Caco-2 (cell line): ENCODE measurements at regions of chr11 and their contacts with region 1.

Region 1: GRCh38 chr11:60775420-60775961 is 9.6 kb upstream of the MS4A10 start:
- DNase-seq: peak; percentile 83 to 89
- H3K4me3 ChIP-seq: no peak overlapping the region
- H3K4me3 Mint-ChIP-seq: no peak overlapping the region
- H3K27ac Mint-ChIP-seq: no peak overlapping the region
- H3K4me1 ChIP-seq: no peaks in the 10 kb centered on the region
- H3K4me1 Mint-ChIP-seq: no peaks in the 10 kb centered on the region
- H3K27me3 ChIP-seq: no peaks in the 10 kb centered on the region
- H3K27me3 Mint-ChIP-seq: no peaks in the 10 kb centered on the region
- CTCF ChIP-seq: peak; percentile 92 to 95

Region 2: GRCh38 chr11:60700689-60701480 is 74.6 kb before region 1 on chr11:
- CTCF ChIA-PET with region 1: interaction called, 4 read pairs
- POLR2A ChIA-PET with region 1: interaction called, 4 read pairs
- intact Hi-C with region 1: loop called (anchors 1 kb)
- DNase-seq: peak; percentile 56 to 75
- H3K4me3 ChIP-seq: no peak overlapping the region
- H3K4me3 Mint-ChIP-seq: no peak overlapping the region
- H3K27ac Mint-ChIP-seq: no peak overlapping the region
- H3K4me1 ChIP-seq: peaks cover 7% of the 10 kb centered on the region; the same call in 1 of the 2 replicates
- H3K4me1 Mint-ChIP-seq: peaks cover 16% of the 10 kb centered on the region
- H3K27me3 ChIP-seq: no peaks in the 10 kb centered on the region
- H3K27me3 Mint-ChIP-seq: no peaks in the 10 kb centered on the region
- CTCF ChIP-seq: peak; percentile 71 to 80

Region 3: DNA sequence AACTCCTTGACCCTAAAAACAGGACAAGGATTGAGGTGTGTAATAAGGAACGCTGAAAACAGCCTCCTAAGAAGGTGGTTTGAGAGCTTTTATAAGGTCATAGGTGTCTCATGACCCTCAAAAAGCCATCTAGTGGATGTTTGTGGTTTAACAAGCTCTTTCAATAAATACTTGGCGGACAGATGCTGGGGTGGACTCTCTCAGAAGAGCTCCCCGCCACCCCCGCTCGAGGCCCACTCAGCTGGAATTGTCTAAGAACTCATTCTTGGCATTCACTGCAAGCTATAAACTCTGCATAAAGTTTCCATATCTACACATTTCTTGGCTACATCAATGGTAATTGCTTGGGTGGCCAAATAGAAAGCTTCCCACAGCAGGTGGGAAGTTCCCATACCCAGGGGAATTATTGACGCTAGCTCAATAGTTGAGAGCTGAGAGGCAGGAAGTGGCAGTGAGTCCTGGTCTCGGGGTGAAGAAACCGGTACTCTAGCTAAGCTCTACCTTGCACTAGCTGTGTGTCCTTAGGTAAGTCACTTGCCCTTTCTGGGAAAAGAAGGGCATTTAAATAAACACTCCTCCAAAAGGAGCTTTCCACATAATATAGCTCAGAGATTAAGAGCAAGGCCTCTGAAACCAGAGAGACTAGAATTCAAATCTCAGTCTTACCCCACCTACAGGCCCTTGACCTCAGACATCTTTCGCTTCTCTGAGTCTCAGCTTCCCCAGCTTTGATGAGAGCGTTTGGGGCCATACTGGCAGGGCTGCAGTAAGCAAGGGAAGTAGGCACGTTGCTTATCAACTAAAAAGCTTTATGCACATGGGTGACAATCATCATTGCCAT is 12.4 kb before region 1 on chr11:
- CTCF ChIA-PET with region 1: interaction called, 21 read pairs
- POLR2A ChIA-PET with region 1: interaction called, 3 read pairs
- intact Hi-C with region 1: no loop called
- DNase-seq: peak in 1 of 2 experiments; percentile 44
- H3K4me3 ChIP-seq: no peak overlapping the region
- H3K4me3 Mint-ChIP-seq: no peak overlapping the region
- H3K27ac Mint-ChIP-seq: no peak overlapping the region
- H3K4me1 ChIP-seq: peaks cover 18% of the 10 kb centered on the region
- H3K4me1 Mint-ChIP-seq: peaks cover 19% of the 10 kb centered on the region
- H3K27me3 ChIP-seq: no peaks in the 10 kb centered on the region
- H3K27me3 Mint-ChIP-seq: no peaks in the 10 kb centered on the region
- CTCF ChIP-seq: peak; percentile 47 to 52

Region 4: DNA sequence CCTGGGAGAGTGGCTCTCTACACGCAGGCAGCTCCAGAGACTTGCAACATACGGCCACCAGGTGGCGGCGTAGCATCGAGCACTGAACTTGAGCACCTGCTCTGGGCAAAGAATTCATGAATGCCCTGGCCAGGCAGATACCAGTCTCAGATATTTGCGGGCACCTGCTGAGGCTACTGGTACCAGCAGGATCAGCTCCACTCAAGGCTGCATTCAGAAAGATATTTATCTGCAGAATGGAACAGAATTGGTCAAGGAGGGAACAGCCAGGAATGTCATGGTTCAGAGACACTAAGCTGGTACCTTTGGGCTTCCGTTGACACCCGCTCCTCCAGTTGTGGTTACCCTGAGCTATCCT is 55.6 kb after region 1 on chr11:
- CTCF ChIA-PET with region 1: interaction called, 8 read pairs
- POLR2A ChIA-PET with region 1: no interaction called
- intact Hi-C with region 1: loop called (anchors 1 kb)
- DNase-seq: peak; percentile 70 to 83
- H3K4me3 ChIP-seq: no peak overlapping the region
- H3K4me3 Mint-ChIP-seq: no peak overlapping the region
- H3K27ac Mint-ChIP-seq: no peak overlapping the region
- H3K4me1 ChIP-seq: no peaks in the 10 kb centered on the region
- H3K4me1 Mint-ChIP-seq: no peaks in the 10 kb centered on the region
- H3K27me3 ChIP-seq: no peaks in the 10 kb centered on the region
- H3K27me3 Mint-ChIP-seq: peaks cover 3% of the 10 kb centered on the region
- CTCF ChIP-seq: peak; percentile 92 to 94

Region 5: DNA sequence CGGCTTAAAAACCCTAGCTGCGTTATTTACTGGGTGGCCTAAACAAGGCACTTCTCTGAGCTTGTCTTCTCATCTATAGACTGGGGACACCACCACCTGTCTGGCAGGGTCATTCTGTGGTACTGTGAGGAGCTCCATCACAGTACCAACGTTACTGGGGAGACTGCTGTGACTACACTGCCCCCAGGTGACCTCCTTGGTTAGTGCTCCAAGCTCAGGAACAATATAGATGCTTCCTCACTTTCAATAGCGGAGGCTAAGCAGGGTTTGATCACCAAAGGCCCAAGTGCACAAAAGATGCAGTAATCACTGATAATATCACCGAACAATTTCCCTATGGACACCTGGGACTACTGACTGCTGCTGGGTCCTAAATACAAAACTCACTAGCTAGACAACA is 112.1 kb after region 1 on chr11:
- CTCF ChIA-PET with region 1: interaction called, 24 read pairs
- POLR2A ChIA-PET with region 1: no interaction called
- intact Hi-C with region 1: loop called (anchors 1 kb)
- DNase-seq: peak; percentile 67 to 75
- H3K4me3 ChIP-seq: no peak overlapping the region
- H3K4me3 Mint-ChIP-seq: no peak overlapping the region
- H3K27ac Mint-ChIP-seq: no peak overlapping the region
- H3K4me1 ChIP-seq: no peaks in the 10 kb centered on the region
- H3K4me1 Mint-ChIP-seq: peaks cover 7% of the 10 kb centered on the region
- H3K27me3 ChIP-seq: no peaks in the 10 kb centered on the region
- H3K27me3 Mint-ChIP-seq: no peaks in the 10 kb centered on the region
- CTCF ChIP-seq: peak; percentile 72 to 87

Region 6: GRCh38 chr11:60899046-60899936 is 123.8 kb after region 1 on chr11:
- CTCF ChIA-PET with region 1: interaction called, 6 read pairs
- POLR2A ChIA-PET with region 1: no interaction called
- intact Hi-C with region 1: loop called (anchors 1 kb)
- DNase-seq: peak in 1 of 2 experiments; percentile 71
- H3K4me3 ChIP-seq: no peak overlapping the region
- H3K4me3 Mint-ChIP-seq: no peak overlapping the region
- H3K27ac Mint-ChIP-seq: no peak overlapping the region
- H3K4me1 ChIP-seq: no peaks in the 10 kb centered on the region
- H3K4me1 Mint-ChIP-seq: no peaks in the 10 kb centered on the region
- H3K27me3 ChIP-seq: no peaks in the 10 kb centered on the region
- H3K27me3 Mint-ChIP-seq: no peaks in the 10 kb centered on the region
- CTCF ChIP-seq: peak; percentile 92 to 95

Region 7: GRCh38 chr11:61173456-61173855 is 398.0 kb after region 1 on chr11:
- CTCF ChIA-PET with region 1: no interaction called
- POLR2A ChIA-PET with region 1: no interaction called
- intact Hi-C with region 1: loop called (anchors 5 kb)
- DNase-seq: peak; percentile 43 to 46
- H3K4me3 ChIP-seq: no peak overlapping the region
- H3K4me3 Mint-ChIP-seq: no peak overlapping the region
- H3K27ac Mint-ChIP-seq: no peak overlapping the region
- H3K4me1 ChIP-seq: peaks cover 8% of the 10 kb centered on the region; the same call in 1 of the 2 replicates
- H3K4me1 Mint-ChIP-seq: peaks cover 7% of the 10 kb centered on the region
- H3K27me3 ChIP-seq: no peaks in the 10 kb centered on the region
- H3K27me3 Mint-ChIP-seq: no peaks in the 10 kb centered on the region
- CTCF ChIP-seq: peak; percentile 25 to 40